Ascending aorta (tissue), 2 donors: ENCODE measurements at regions of chr1 and their contacts with region 1.

Region 1: DNA sequence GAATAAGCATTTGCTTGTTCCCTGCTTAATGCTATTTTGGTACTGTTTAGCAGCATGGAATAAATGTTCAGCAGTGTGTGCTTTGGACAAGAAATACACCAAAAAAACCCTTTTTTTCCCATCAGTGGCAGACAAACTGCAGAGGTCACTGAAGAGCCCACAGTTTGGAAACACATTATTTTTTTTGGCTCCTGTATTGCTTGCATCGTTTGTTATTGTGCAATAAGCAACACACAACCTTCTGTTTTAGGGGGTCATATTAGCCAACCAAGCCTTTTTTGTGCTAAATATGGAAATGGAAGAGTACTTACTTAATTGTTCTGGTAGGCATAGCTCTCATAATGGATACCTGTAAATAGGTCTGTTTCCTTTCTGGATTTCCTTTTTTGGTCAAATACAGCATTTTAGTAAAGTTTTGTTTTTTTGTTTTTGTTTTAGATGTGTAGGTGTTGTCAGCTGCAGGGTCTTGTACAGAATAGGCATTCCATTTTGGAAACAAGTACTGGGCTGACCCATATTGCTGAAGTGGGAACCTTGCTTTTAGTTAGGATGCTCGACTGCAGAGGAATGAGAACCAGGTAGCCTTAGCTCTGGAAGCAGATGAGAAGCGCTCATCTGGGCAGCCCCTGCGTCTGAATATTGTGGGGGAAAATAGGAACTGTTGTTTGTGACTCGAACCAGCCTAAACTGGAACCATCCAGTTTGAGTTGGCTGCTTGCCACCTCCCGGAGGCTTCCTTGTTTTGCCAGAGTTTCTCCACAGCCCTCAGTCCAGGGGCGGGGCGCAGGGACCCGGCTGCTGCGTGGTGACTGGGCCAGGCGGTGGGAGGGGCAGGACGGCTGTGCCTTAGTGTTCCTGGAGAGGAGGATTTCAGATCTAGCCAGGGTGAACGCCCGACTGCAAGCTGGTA is 38.4 kb downstream of the SPEN start:
- DNase-seq: peak; percentile 98 to 99
- H3K4me3 ChIP-seq: peak overlapping the region; percentile 54 to 61
- H3K27ac ChIP-seq: peak overlapping the region; percentile 86 to 91
- H3K4me1 ChIP-seq: peaks cover 9 to 71% of the 10 kb centered on the region in 2 donors
- H3K27me3 ChIP-seq: no peaks in the 10 kb centered on the region
- CTCF ChIP-seq: no peak

Region 2: GRCh38 chr1:15820478-15820877 is 65.5 kb before region 1 on chr1:
- intact Hi-C with region 1: loop called (anchors 5 kb)
- DNase-seq: no peak
- H3K4me3 ChIP-seq: no peak overlapping the region
- H3K27ac ChIP-seq: no peak overlapping the region
- H3K4me1 ChIP-seq: peaks cover 0 to 15% of the 10 kb centered on the region in 2 donors
- H3K27me3 ChIP-seq: no peaks in the 10 kb centered on the region
- CTCF ChIP-seq: no peak

Region 3: GRCh38 chr1:15835741-15836510 is 50.0 kb before region 1 on chr1:
- intact Hi-C with region 1: loop called (anchors 2 kb)
- DNase-seq: peak; percentile 97 to 100
- H3K4me3 ChIP-seq: peak overlapping the region; percentile 79 to 95
- H3K27ac ChIP-seq: peak overlapping the region; percentile 100
- H3K4me1 ChIP-seq: peaks cover 0 to 30% of the 10 kb centered on the region in 2 donors
- H3K27me3 ChIP-seq: no peaks in the 10 kb centered on the region
- CTCF ChIP-seq: no peak

Region 4: DNA sequence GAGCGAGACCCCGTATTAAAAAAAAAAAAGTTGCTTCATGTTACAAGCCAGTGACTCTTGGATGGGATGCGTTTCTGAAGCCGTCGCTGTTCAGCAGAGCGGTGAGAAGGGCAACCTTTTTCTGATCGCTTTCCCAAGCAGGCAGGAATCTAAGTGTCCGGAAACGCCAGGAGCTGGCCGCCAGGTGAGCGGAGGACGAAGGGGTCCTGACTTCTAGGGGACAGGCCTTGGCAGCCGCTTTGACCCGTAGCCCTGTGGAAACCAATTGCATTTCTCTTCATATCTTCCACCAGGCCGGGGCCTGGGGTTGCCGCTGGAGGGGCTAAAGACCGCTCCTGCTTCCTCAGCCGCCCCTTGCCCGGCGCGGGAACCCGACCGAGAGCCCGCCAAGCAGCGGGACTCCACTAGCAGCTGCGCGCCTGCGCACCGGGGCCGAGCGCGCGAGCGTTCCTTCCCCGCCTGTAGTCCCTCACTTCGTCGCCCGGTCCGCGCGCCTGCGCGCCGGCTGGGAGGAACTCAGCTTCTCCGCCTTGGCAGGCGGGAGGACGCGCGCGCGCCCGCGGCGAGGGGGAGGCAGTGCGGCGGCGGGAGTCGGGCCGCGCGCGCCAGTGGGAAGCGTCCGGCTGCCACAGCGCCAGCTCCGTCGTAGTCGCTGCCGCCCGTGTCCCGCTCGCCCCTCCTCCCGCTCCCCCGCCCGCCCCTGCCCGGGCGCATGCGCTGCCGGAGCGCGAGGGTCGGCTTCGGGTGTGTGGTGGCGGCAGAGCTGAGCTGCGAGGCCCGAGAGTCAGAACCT is 38.7 kb before region 1 on chr1 and contains the start of gene SPEN:
- intact Hi-C with region 1: loop called (anchors 1 kb)
- DNase-seq: peak; percentile 93 to 99
- H3K4me3 ChIP-seq: peak within 1 kb of the TSS; percentile 98 to 100
- H3K27ac ChIP-seq: peak within 1 kb of the TSS; percentile 96 to 99
- H3K4me1 ChIP-seq: peaks cover 7 to 38% of the 10 kb centered on the region in 2 donors
- H3K27me3 ChIP-seq: no peaks in the 10 kb centered on the region
- CTCF ChIP-seq: no peak
- total RNA-seq, gene SPEN: 53.9 TPM

Region 5: GRCh38 chr1:15937706-15938168 is 51.8 kb after region 1 on chr1:
- intact Hi-C with region 1: loop called (anchors 5 kb)
- DNase-seq: no peak
- H3K4me3 ChIP-seq: no peak overlapping the region
- H3K27ac ChIP-seq: peak overlapping the region; percentile 65 to 66
- H3K4me1 ChIP-seq: peaks cover 0 to 6% of the 10 kb centered on the region in 2 donors
- H3K27me3 ChIP-seq: no peaks in the 10 kb centered on the region
- CTCF ChIP-seq: no peak

Region 6: GRCh38 chr1:15949453-15950245 is 63.7 kb after region 1 on chr1:
- intact Hi-C with region 1: loop called (anchors 5 kb)
- DNase-seq: peak; percentile 97 to 99
- H3K4me3 ChIP-seq: peak overlapping the region; percentile 12 to 51
- H3K27ac ChIP-seq: peak overlapping the region; percentile 96 to 98
- H3K4me1 ChIP-seq: peaks cover 55 to 66% of the 10 kb centered on the region in 2 donors
- H3K27me3 ChIP-seq: no peaks in the 10 kb centered on the region
- CTCF ChIP-seq: no peak